ENCODE measurements at regions of chr1 and their contacts with region 1.

Region 1: DNA sequence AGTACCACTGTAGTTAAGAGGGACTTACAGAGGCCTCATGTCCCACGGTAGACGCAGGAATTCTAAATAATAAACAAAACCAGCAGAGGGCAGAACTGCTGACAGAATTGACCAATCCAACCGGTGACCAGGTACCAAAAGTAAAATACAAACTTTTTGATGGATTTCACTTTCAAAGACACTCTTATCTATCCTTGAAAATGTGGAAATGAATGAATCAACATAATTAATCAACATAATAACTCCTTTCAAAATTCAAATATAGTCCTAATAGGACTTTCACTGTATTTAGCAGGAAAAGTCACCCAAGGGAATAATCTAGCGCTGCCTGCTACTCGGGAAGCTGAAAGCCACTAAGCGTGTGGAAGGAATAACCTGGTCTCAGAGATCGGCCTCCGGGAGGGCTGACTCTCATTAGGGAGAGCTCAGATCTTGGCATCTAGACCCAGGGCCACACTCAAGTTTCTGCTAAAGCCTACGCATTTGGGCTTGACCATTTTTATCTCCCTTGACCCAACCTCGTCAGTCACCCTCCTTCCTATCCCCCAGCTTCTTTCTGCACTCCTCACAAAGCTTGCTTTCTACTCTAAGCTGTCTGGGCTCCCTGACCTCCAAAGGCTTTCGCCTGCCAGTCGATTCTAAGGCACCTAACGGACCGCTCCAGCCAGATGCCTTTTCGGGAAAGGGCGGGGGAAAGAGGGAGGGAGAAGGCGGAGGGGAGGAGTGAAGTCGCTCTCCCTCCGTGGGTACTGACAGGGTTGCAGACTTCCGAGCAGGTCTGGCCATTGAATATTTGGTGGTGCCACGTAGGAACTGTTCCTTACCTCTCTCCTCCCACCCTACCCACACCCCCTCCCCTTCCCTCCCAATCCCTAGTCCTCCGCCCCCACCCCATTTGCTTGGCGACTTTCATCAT is 1.6 kb downstream of the COL11A1 start:
- DNase-seq: no peak
- H3K4me3 ChIP-seq: peak overlapping the region; percentile 49 to 57 (median 50)
- H3K27ac ChIP-seq: peak overlapping the region in 1 of 4 donors; percentile 12
- H3K4me1 ChIP-seq: peaks cover 13 to 34% (median 26%) of the 10 kb centered on the region in 4 donors
- H3K27me3 ChIP-seq: peaks cover 0 to 16% (median 0%) of the 10 kb centered on the region in 4 donors
- CTCF ChIP-seq: peak in 2 of 3 experiments; percentile 44 to 53
- EP300 ChIP-seq: no peak
- POLR2A ChIP-seq: no peak

Region 2: GRCh38 chr1:103056423-103056822 is 50.3 kb before region 1 on chr1:
- intact Hi-C with region 1: no loop called
- DNase-seq: no peak
- H3K4me3 ChIP-seq: no peak overlapping the region
- H3K27ac ChIP-seq: no peak overlapping the region
- H3K4me1 ChIP-seq: no peaks in the 10 kb centered on the region
- H3K27me3 ChIP-seq: no peaks in the 10 kb centered on the region
- CTCF ChIP-seq: no peak
- EP300 ChIP-seq: no peak
- POLR2A ChIP-seq: no peak

Region 3: DNA sequence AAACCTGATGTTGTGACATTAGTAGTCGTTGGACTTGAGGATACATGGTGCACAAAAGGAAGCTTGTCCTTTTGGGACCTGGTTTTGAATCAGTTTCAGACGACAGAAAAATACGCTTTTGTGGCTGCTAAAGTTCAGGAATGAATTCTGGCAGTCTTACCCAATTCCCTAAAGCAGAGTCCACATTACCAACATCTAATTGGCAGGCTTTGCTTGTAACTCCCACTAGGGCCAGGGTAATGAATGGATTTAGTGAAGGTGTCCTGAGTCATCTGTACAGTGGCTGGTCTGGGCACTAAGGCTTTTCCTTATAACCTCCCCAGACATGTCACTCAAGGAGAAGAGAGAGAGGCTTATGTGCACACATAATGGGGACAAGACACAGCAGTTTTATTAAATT is 352.7 kb after region 1 on chr1:
- intact Hi-C with region 1: loop called (anchors 5 kb)
- DNase-seq: no peak
- H3K4me3 ChIP-seq: no peak overlapping the region
- H3K27ac ChIP-seq: no peak overlapping the region
- H3K4me1 ChIP-seq: no peaks in the 10 kb centered on the region
- H3K27me3 ChIP-seq: peaks cover 0 to 3% (median 0%) of the 10 kb centered on the region in 4 donors
- CTCF ChIP-seq: no peak
- EP300 ChIP-seq: no peak
- POLR2A ChIP-seq: no peak

Region 4: DNA sequence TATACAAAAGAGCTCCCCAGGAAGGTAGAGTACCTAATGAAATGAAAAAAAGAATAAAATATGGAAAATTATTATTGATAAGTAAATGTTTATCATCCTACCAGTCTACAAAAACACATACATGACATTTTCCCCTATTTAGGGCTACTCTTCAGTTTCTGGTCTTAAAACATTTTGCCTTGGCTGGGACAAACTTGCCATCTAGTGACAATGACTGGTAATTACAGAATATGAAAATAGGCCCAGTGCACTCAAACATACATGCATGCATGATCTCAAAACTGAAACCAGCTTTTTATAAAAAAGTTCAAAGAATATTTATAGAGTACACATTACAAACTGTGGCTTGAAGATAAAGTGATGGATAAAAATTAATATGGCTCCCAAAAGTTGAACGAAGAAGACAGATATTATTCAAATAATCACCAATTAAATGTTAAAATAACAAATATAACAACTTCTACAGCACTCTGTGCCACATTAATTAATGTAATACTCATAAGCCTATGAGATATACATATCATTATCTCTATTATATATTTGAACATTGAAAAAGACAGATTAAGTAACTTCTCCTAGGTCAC is 408.3 kb after region 1 on chr1:
- intact Hi-C with region 1: loop called (anchors 5 kb)
- DNase-seq: no peak
- H3K4me3 ChIP-seq: no peak overlapping the region
- H3K27ac ChIP-seq: no peak overlapping the region
- H3K4me1 ChIP-seq: no peaks in the 10 kb centered on the region
- H3K27me3 ChIP-seq: no peaks in the 10 kb centered on the region
- CTCF ChIP-seq: peak; percentile 55 to 72 (median 63)
- EP300 ChIP-seq: no peak
- POLR2A ChIP-seq: no peak